ENCODE measurements at regions of chr10 and their contacts with region 1.

Region 1: DNA sequence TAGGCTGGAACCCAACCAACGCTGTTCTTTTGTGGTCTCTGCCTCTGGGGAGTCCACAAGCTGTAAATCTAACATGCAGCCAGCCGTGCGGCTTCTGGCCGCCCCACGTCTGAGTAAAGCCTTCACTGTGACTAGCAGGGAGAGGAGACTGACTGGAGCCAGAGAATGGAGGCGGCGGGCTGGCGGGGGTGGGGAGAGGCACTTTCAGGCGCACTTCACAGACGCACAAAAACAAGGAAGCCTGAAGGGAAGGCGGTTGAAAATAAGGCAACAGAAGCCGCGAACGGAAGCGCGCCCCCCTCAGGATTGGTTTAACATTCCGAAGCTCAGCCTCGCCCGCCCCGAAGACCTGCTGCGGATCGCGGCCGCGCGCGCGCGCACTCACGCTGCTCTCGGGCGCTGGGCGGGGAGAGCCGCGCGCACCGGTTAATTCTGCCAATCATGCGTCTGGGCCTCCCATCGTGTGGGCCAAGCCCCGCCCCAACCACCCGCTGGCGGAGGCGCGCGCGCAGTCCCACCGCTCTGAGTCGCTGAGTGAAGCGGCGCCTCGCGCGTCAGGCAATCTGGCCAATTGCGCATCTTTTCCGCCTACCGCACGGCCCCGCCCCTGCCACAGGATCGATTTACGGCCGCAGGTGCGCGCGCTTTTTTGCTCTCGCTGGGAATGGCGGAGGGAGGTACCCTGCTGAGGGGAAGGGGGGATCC is at the start of gene SFR1:
- DNase-seq: peak; percentile 99
- ATAC-seq: peak; percentile 96
- H3K4me3 Mint-ChIP-seq: peak within 1 kb of the TSS; percentile 96
- H3K27ac Mint-ChIP-seq: peak within 1 kb of the TSS; percentile 98
- H3K4me1 Mint-ChIP-seq: peaks cover 24% of the 10 kb centered on the region
- H3K27me3 Mint-ChIP-seq: peaks cover 18% of the 10 kb centered on the region
- total RNA-seq, gene SFR1: 13.3 to 15.7 TPM

Region 2: GRCh38 chr10:103888113-103888841 is 233.4 kb before region 1 on chr10:
- POLR2A ChIA-PET with region 1: interaction called, 15 read pairs
- DNase-seq: no peak
- ATAC-seq: peak; percentile 58
- H3K4me3 Mint-ChIP-seq: no peak overlapping the region
- H3K27ac Mint-ChIP-seq: peak overlapping the region; percentile 34
- H3K4me1 Mint-ChIP-seq: peaks cover 16% of the 10 kb centered on the region
- H3K27me3 Mint-ChIP-seq: no peaks in the 10 kb centered on the region

Region 3: DNA sequence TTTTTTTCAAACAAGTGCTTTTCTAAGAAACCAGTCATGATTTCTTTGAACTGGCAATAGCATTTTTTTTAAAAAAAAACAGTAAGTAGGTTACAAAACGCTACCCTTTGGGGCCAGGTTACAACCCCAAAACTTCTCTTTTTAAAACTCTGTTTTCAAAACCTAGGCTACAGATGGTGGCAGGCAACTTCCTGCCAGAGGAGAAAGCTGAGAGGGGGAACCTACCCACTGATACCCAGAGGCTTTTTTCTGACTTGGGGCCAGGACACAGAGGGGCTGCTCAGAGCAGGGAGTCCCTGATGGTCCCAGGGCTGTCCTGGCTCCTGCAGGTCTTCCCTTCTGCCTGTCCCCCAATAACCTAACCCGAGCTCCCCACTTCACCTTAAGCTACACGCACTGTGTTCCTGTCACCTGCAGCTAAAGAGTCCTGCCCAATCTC is 210.6 kb before region 1 on chr10:
- POLR2A ChIA-PET with region 1: interaction called, 11 read pairs
- DNase-seq: peak; percentile 70
- ATAC-seq: peak; percentile 76
- H3K4me3 Mint-ChIP-seq: peak overlapping the region; percentile 86
- H3K27ac Mint-ChIP-seq: peak overlapping the region; percentile 95
- H3K4me1 Mint-ChIP-seq: peaks cover 71% of the 10 kb centered on the region
- H3K27me3 Mint-ChIP-seq: no peaks in the 10 kb centered on the region

Region 4: DNA sequence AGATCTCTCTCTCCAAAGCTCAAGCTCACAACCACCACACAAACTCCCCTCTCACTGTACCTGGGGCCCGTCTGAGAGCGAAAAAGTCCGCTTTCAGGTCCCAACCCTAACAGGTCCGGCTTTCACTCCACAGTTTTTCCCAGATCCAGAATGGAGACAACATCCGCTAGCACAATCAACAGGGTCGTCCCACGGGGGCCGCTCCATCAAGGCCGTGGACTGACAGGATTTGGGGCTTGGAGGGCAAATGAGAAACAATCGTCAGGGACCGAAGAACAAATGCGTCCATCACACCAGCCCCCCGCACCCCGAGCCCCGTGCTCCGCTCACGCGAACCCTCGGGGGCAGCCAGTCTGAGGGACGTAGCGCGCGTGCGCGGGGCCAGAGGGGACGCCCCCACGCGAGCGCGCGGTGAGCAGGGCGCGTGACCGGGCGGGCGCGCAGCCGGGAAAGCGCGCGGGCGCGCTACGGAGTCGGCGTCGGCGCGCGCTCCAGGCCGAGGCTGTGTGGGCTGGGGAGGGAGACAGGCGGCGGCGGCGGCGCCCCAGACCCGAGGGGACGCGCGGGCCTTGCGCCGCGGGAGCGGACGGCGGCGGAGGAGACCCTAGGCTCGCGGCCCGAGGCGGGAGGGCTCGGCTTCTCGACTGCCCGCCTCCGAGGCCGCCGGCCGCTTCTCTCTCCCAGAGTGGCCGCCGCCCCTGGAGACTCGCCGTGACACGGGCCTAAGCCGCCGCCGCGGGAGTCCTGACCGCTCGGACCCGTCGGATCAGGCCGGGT is 154.8 kb before region 1 on chr10 and contains the start of gene SLK:
- POLR2A ChIA-PET with region 1: interaction called, 28 read pairs
- DNase-seq: peak; percentile 96
- ATAC-seq: peak; percentile 87
- H3K4me3 Mint-ChIP-seq: peak within 1 kb of the TSS; percentile 99
- H3K27ac Mint-ChIP-seq: peak within 1 kb of the TSS; percentile 96
- H3K4me1 Mint-ChIP-seq: peaks cover 27% of the 10 kb centered on the region
- H3K27me3 Mint-ChIP-seq: no peaks in the 10 kb centered on the region
- total RNA-seq, gene SLK: 37.9 to 38.4 TPM

Region 5: GRCh38 chr10:104109908-104110662 is 11.6 kb before region 1 on chr10:
- POLR2A ChIA-PET with region 1: interaction called, 11 read pairs
- DNase-seq: no peak
- ATAC-seq: no peak
- H3K4me3 Mint-ChIP-seq: no peak overlapping the region
- H3K27ac Mint-ChIP-seq: no peak overlapping the region
- H3K4me1 Mint-ChIP-seq: peaks cover 9% of the 10 kb centered on the region
- H3K27me3 Mint-ChIP-seq: peaks cover 13% of the 10 kb centered on the region

Region 6: DNA sequence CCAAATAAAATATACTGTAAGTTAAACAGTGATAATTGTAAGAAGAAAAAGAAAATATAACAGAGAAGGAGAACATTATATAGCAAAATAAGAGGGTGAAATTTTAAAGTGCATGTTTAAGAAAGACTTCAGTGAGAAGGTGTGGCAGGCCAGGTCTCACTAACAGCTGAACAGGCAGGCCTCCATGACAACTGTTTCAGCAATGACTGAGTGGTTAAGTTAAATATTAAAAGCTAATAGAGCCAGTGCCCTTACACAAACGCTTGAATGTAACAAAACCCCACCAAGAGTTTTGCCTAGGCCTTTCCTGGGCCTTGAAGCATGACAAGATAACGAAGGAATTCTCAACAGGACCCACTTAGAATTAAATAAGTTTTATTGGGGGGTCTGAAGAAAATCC is 77.9 kb after region 1 on chr10:
- POLR2A ChIA-PET with region 1: no interaction called
- DNase-seq: no peak
- ATAC-seq: no peak
- H3K4me3 Mint-ChIP-seq: no peak overlapping the region
- H3K27ac Mint-ChIP-seq: no peak overlapping the region
- H3K4me1 Mint-ChIP-seq: no peaks in the 10 kb centered on the region
- H3K27me3 Mint-ChIP-seq: peaks cover 28% of the 10 kb centered on the region